ENCODE measurements at regions of chr5 and their contacts with region 1.

Region 1: GRCh38 chr5:37005946-37006540 is 129.5 kb downstream of the NIPBL start:
- DNase-seq: no peak
- H3K4me3 Mint-ChIP-seq: no peak overlapping the region
- H3K27ac Mint-ChIP-seq: no peak overlapping the region
- H3K4me1 Mint-ChIP-seq: no peaks in the 10 kb centered on the region
- H3K27me3 Mint-ChIP-seq: no peaks in the 10 kb centered on the region

Region 2: DNA sequence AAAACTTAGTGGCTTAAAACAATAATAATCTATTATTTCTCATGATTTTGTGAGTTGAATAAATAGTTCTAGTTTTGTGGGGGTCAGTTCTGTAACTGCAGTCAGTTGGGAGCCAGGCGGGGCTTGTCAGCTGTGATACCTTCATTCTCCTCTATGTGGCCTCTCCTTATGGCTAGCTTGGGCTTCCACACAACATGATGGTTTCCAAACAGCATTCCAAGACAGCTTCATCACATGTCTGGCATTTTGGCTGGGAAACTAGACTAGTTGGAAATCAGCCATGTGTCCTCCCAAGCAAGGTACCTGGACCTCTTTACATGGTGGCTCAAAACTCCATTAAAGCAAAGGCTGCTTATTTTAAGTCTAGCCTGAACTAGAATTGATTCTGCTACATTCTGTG is 642.9 kb before region 1 on chr5:
- CTCF ChIA-PET with region 1: no interaction called
- POLR2A ChIA-PET with region 1: no interaction called
- intact Hi-C with region 1: no loop called
- DNase-seq: no peak
- H3K4me3 Mint-ChIP-seq: no peak overlapping the region
- H3K27ac Mint-ChIP-seq: no peak overlapping the region
- H3K4me1 Mint-ChIP-seq: peaks cover 1% of the 10 kb centered on the region
- H3K27me3 Mint-ChIP-seq: no peaks in the 10 kb centered on the region

Region 3: DNA sequence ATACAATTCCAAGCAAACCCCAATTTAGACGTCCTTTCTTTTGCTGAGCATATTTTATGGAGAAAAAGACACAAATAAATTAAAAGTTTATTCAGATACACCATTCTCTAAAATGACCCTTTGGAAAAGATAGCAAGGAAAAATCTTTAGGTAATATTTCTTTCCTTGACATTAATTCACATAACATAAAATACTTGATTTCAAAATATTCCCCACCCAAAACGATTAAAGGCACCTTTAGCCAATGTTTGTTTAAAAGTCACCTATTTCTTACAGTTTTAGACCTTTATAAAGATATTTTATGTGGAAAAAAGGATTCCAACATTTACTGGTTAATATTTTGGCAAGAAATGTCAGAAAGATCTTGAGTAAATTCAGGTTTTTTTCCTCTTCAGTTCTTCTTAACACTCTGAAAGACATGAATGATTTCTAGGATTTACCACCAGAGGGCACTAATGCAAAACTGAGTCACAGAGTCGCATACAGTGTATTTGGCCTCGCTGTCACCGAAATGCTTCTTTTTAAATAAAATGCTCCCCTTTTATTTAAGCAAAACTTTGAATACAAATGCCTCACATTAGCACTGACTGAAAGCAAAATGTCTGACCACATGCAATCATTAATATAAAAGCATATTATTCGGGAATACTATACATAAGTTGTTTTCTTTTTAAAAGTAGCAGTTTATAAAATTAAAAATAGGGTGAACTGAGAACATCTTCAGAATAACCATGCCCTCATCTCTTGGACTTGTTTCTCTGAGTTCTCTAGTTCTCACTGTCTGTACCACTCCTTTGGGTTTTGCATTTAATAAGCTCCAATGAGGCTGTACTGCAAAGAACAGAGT is 277.1 kb before region 1 on chr5:
- CTCF ChIA-PET with region 1: interaction called, 32 read pairs
- POLR2A ChIA-PET with region 1: no interaction called
- intact Hi-C with region 1: no loop called
- DNase-seq: no peak
- H3K4me3 Mint-ChIP-seq: no peak overlapping the region
- H3K27ac Mint-ChIP-seq: no peak overlapping the region
- H3K4me1 Mint-ChIP-seq: peaks cover 4% of the 10 kb centered on the region
- H3K27me3 Mint-ChIP-seq: peaks cover 5% of the 10 kb centered on the region